ENCODE measurements at regions of chr11 and their contacts with region 1.

Region 1: GRCh38 chr11:133705074-133705648 is 140.2 kb downstream of the SPATA19 start:
- DNase-seq: no peak
- H3K4me3 ChIP-seq: no peak overlapping the region
- H3K27ac ChIP-seq: no peak overlapping the region
- H3K4me1 ChIP-seq: no peaks in the 10 kb centered on the region
- H3K27me3 ChIP-seq: no peaks in the 10 kb centered on the region
- CTCF ChIP-seq: no peak
- POLR2A ChIP-seq: no peak

Region 2: GRCh38 chr11:132451942-132452601 is 1253.1 kb before region 1 on chr11:
- intact Hi-C with region 1: loop called (anchors 5 kb)
- DNase-seq: no peak
- H3K4me3 ChIP-seq: no peak overlapping the region
- H3K27ac ChIP-seq: no peak overlapping the region
- H3K4me1 ChIP-seq: no peaks in the 10 kb centered on the region
- H3K27me3 ChIP-seq: no peaks in the 10 kb centered on the region
- CTCF ChIP-seq: no peak
- POLR2A ChIP-seq: no peak

Region 3: GRCh38 chr11:133508468-133508867 is 196.7 kb before region 1 on chr11:
- intact Hi-C with region 1: no loop called
- DNase-seq: peak in 1 of 2 donors; percentile 64
- H3K4me3 ChIP-seq: no peak overlapping the region
- H3K27ac ChIP-seq: no peak overlapping the region
- H3K4me1 ChIP-seq: no peaks in the 10 kb centered on the region
- H3K27me3 ChIP-seq: no peaks in the 10 kb centered on the region
- CTCF ChIP-seq: no peak
- POLR2A ChIP-seq: no peak

Region 4: DNA sequence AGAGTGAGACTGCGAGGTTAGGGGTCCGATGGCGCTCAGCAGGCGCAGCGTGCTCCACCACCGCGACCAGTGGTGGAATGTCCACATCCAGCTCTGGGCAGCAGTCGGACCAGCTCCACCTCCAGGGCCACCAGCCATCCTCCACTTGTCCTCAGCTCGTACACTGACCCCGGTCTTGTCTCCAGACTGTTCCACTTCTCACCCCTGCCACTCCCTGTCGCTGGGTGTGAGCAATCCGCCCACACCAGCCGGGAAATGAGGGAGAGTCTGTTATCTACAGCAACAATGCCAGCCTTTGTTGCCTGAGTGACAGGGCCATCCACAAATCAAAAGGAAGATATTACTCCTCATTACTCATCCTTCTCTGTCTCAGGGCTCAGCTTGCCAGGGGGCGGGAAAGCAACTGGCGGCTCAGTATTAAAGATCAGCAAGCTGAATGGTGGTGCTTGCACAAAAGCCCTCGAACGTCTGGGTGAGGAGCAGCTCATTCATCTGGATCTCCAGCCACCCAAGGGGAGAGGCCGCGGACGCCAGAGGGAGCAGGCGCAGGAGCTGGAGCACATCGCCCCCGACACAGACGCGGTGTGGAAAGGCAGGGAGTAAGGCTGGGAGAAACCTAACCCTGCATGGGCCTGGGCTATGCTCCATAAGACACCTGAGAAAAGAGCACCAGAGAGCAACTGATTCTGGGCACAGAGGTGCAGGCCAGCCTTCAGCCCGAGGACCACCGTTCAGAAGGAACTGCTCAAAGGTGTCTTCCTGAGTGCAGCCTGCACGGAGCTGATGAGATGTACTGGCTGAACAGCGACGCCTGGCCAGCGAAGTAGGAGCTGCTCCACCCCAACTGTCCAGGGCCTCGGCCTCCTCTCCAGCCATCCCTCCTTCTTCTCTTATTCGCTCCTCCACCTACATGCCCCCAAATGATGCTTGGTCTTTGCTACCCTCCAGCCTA is 229.7 kb after region 1 on chr11:
- intact Hi-C with region 1: no loop called
- DNase-seq: no peak
- H3K4me3 ChIP-seq: no peak overlapping the region
- H3K27ac ChIP-seq: no peak overlapping the region
- H3K4me1 ChIP-seq: no peaks in the 10 kb centered on the region
- H3K27me3 ChIP-seq: no peaks in the 10 kb centered on the region
- CTCF ChIP-seq: no peak
- POLR2A ChIP-seq: no peak